ENCODE measurements at regions of chr19 and their contacts with region 1.

Region 1: DNA sequence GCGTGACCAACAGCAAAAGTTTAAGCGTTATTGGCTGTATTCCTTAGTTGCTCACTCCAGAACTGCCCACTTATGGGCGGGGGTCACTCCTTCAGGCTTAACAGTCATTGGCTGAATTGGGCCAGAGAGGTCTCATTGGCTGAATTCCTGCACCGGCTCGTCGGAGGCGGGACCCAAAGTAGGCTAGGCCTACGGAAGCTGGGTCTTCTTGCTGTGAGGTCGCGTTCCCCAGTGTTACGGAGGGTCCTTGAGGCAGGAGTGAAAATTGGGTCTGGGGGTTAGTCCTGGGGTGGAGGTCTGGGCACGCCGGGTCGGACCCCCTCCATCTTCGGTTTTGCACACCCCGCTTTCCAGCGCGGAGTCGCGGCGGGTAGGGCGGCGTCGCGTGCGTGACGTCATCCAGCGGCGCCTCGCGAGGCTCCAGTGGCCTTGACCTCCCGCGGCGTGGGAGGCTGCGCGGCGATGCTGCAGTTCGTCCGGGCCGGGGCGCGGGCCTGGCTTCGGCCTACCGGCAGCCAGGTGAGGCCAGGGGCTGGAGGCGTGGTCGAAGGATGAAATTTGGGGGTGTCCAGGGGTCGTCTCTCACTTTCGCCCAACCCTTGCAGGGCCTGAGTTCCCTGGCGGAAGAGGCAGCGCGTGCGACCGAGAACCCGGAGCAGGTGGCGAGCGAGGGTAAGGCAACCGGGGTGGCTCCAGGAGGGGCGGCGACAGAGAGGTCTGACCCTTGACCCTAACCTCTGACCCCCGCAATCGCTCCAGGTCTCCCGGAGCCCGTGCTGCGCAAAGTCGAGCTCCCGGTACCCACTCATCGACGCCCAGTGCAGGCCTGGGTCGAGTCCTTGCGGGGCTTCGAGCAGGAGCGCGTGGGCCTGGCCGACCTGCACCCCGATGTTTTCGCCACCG is at the start of gene MRPL4:
- DNase-seq: peak; percentile 98
- H3K4me3 Mint-ChIP-seq: peak within 1 kb of the TSS; percentile 97
- H3K27ac Mint-ChIP-seq: peak within 1 kb of the TSS; percentile 96
- H3K4me1 Mint-ChIP-seq: peaks cover 20% of the 10 kb centered on the region
- H3K27me3 Mint-ChIP-seq: no peaks in the 10 kb centered on the region
- total RNA-seq, gene MRPL4: 106 to 115 TPM

Region 2: DNA sequence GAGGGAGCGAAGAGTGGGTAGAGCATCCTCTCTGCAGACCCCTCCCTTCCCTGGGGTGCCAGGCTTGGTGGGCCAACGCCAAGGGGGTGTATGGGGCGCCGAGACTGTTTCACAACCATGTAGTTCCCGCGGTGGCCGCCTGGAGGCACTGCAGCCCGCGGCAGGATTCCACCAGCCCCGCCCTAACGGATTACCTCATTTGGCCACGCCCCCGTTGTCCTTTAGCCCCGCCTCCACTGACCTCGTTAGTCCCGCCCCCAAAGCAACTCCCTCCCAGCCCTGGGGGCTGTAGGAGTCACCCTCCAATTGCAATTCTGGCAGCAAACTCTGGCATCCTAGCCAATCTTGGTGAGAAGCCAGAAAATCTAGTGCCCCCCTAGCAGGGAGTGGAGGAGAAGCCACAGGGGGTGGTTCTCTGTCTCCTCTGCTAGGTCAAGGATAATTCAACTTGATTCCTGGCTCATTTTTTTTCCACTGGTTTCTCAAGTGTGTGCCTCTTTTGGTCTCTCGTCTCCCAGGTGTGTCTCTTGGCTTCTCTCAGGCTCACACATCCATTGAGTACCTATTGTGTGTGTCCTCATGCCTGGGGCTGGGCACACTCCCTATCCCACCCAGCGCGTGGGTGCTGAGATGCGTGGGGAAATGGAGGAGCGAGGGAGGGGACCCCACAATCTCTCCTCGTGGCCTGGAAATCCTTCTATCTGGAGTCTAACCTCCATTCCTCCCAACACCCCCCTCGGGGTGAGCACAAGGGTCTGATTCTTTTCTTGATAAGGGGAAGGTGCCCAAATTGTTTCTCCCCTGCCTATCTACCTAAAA is 317.7 kb before region 1 on chr19:
- CTCF ChIA-PET with region 1: interaction called, 8 read pairs
- POLR2A ChIA-PET with region 1: no interaction called
- intact Hi-C with region 1: loop called (anchors 1 kb)
- DNase-seq: peak; percentile 90
- H3K4me3 Mint-ChIP-seq: no peak overlapping the region
- H3K27ac Mint-ChIP-seq: no peak overlapping the region
- H3K4me1 Mint-ChIP-seq: peaks cover 28% of the 10 kb centered on the region
- H3K27me3 Mint-ChIP-seq: peaks cover 46% of the 10 kb centered on the region

Region 3: GRCh38 chr19:9981406-9982260 is 270.4 kb before region 1 on chr19:
- CTCF ChIA-PET with region 1: no interaction called
- POLR2A ChIA-PET with region 1: no interaction called
- intact Hi-C with region 1: no loop called
- DNase-seq: no peak
- H3K4me3 Mint-ChIP-seq: no peak overlapping the region
- H3K27ac Mint-ChIP-seq: no peak overlapping the region
- H3K4me1 Mint-ChIP-seq: no peaks in the 10 kb centered on the region
- H3K27me3 Mint-ChIP-seq: peaks cover 5% of the 10 kb centered on the region

Region 4: DNA sequence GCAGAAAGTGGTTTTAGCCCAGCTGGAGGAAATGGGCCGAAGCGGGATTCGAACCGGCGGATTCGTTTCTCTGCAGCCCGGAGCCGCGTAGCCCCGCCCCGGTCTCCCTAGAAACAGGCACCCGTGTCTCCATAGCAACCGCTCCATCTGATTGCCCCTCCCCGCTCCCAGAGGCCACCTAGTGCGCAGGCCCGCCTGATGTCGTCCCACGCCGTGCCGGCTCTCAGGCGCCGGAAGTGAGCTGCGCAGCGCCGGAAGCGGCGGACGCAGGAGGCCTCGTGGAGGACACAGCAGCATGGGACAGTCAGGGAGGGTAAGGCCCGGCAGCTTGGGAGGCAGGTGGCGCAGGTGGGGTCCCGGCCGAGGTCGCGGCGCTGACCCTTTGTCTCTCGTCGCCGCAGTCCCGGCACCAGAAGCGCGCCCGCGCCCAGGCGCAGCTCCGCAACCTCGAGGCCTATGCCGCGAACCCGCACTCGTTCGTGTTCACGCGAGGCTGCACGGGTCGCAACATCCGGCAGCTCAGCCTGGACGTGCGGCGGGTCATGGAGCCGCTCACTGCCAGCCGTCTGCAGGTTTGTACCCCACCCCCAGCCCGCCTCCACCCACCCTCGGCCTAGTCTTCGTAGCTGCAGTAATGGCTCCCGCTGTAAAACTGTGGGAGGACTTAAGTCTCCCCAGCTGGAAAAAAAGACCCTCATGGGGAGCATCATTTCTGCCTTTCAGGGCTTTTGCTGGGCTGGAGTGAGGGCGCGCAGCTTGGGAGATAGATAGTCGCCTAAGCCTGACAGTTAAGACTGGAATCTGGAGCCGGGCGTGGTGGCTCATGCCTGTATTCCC is 145.7 kb before region 1 on chr19 and contains the start of gene PPAN:
- CTCF ChIA-PET with region 1: interaction called, 16 read pairs
- POLR2A ChIA-PET with region 1: no interaction called
- intact Hi-C with region 1: loop called (anchors 5 kb)
- DNase-seq: peak; percentile 99
- H3K4me3 Mint-ChIP-seq: peak within 1 kb of the TSS; percentile 88
- H3K27ac Mint-ChIP-seq: peak within 1 kb of the TSS; percentile 99
- H3K4me1 Mint-ChIP-seq: peaks cover 67% of the 10 kb centered on the region
- H3K27me3 Mint-ChIP-seq: no peaks in the 10 kb centered on the region
- total RNA-seq, gene PPAN: 99.2 to 107 TPM

Region 5: GRCh38 chr19:10180463-10180862 is 71.6 kb before region 1 on chr19:
- CTCF ChIA-PET with region 1: interaction called, 10 read pairs
- POLR2A ChIA-PET with region 1: interaction called, 3 read pairs
- intact Hi-C with region 1: no loop called
- DNase-seq: no peak
- H3K4me3 Mint-ChIP-seq: no peak overlapping the region
- H3K27ac Mint-ChIP-seq: no peak overlapping the region
- H3K4me1 Mint-ChIP-seq: peaks cover 11% of the 10 kb centered on the region
- H3K27me3 Mint-ChIP-seq: no peaks in the 10 kb centered on the region

Region 6: DNA sequence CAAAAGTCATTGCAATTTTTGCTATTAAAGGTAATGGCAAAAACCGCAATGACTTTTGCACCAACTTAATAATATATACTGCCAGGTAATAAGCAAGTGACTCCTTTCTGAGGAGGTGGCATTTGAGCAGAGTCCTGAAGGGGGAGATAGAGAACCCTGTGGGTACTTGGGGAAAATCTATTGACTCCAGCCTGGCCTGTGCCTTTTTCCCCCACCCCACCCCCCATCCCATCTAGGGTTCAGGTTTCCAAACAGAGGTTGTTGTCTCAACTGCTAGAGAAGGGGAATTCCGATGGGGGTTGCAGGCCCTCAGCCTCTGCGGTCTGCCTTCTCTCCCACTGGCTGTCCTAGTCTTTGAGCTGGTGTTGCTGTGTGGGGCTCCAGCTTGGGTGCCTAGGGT is 32.4 kb before region 1 on chr19:
- CTCF ChIA-PET with region 1: interaction called, 41 read pairs
- POLR2A ChIA-PET with region 1: no interaction called
- intact Hi-C with region 1: loop called (anchors 1 kb)
- DNase-seq: peak; percentile 61
- H3K4me3 Mint-ChIP-seq: no peak overlapping the region
- H3K27ac Mint-ChIP-seq: no peak overlapping the region
- H3K4me1 Mint-ChIP-seq: peaks cover 10% of the 10 kb centered on the region
- H3K27me3 Mint-ChIP-seq: no peaks in the 10 kb centered on the region

Region 7: GRCh38 chr19:10269333-10270179 is 17.5 kb after region 1 on chr19:
- CTCF ChIA-PET with region 1: interaction called, 11 read pairs
- POLR2A ChIA-PET with region 1: interaction called, 5 read pairs
- intact Hi-C with region 1: no loop called
- DNase-seq: peak; percentile 93
- H3K4me3 Mint-ChIP-seq: peak overlapping the region; percentile 85
- H3K27ac Mint-ChIP-seq: peak overlapping the region; percentile 89
- H3K4me1 Mint-ChIP-seq: peaks cover 30% of the 10 kb centered on the region
- H3K27me3 Mint-ChIP-seq: no peaks in the 10 kb centered on the region

Region 8: GRCh38 chr19:10295305-10295846 is 43.3 kb after region 1 on chr19:
- CTCF ChIA-PET with region 1: no interaction called
- POLR2A ChIA-PET with region 1: no interaction called
- intact Hi-C with region 1: no loop called
- DNase-seq: peak; percentile 72
- H3K4me3 Mint-ChIP-seq: peak overlapping the region; percentile 70
- H3K27ac Mint-ChIP-seq: no peak overlapping the region
- H3K4me1 Mint-ChIP-seq: peaks cover 39% of the 10 kb centered on the region
- H3K27me3 Mint-ChIP-seq: peaks cover 53% of the 10 kb centered on the region